Aorta (tissue), 5 donors: ENCODE measurements at regions of chr1 and their contacts with region 1.

Region 1: GRCh38 chr1:91282695-91283420 is 121.8 kb downstream of the HFM1 start:
- DNase-seq: no peak
- ATAC-seq: peak; percentile 86
- H3K4me3 ChIP-seq: no peak overlapping the region
- H3K27ac ChIP-seq: no peak overlapping the region
- H3K4me1 ChIP-seq: peaks cover 0 to 2% of the 10 kb centered on the region in 2 donors
- H3K27me3 ChIP-seq: no peaks in the 10 kb centered on the region

Region 2: DNA sequence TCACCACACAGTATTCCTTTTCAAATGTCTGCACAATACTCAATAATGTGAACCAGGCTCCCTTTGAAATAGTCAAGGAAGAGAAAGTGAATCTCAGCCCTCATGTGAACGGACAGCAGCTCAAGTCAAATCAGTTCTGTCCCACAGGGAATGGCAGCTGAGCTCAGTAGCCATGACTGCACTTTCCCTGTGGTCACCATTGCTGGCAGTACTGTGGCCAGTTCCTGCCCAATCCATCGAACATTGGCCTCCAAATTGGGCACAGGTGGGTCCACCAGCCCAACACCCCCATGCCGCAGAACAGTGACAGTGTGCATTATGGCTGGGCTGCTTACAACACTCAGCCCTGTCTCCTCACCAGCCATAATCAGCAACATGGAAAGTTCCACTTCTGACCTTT is 79.6 kb before region 1 on chr1:
- intact Hi-C with region 1: no loop called
- DNase-seq: no peak
- ATAC-seq: no peak
- H3K4me3 ChIP-seq: no peak overlapping the region
- H3K27ac ChIP-seq: no peak overlapping the region
- H3K4me1 ChIP-seq: no peaks in the 10 kb centered on the region
- H3K27me3 ChIP-seq: no peaks in the 10 kb centered on the region

Region 3: DNA sequence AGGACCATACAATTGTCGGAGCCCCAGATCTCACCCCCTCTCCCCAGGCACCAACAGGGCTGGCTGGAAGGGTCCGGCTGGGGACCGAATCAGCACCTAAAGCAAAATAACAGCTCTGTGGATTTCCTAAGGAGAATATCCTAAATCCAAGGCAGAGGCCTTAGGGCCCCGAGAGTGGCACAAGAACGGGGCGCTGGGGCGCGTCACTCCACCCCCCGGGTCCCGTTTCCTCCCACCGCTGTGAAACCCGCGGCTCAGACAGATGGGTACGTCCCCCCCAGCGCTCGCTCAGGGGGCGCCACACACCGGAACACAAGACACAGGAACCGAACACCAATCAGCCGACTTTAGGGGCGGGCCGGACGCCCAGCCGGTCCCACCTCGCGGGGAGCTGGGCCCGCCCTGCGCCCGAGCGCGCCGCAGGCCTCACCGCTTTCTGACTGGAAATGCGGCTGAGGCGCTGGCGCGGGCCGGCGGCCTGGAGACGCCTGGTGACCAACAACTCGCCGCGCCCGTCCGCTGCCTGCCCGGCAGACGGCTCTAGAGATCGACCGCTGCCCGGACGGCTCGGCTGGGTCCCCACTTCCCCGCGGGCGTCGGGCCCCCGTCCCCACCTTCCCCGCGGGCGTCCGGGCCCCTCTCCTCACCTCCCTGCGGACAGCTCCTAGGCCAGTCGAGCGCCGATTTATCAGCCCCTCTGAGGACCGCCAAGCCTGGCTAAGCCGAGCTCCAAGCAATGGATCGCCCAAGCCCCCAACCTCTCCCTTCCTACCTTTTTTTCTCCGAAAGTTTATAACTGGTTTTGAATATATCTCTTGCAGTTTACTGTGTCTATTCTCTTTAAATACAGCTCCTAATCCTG is 121.5 kb after region 1 on chr1 and contains the start of gene HFM1:
- intact Hi-C with region 1: loop called in 1 of 2 experiments (anchors 10 kb)
- DNase-seq: peak; percentile 82 to 92
- ATAC-seq: peak; percentile 94
- H3K4me3 ChIP-seq: peak within 1 kb of the TSS; percentile 1 to 18
- H3K27ac ChIP-seq: no peak within 1 kb of the TSS
- H3K4me1 ChIP-seq: no peaks in the 10 kb centered on the region
- H3K27me3 ChIP-seq: no peaks in the 10 kb centered on the region
- total RNA-seq, gene HFM1: 1.2 to 3.0 TPM

Region 4: GRCh38 chr1:91500756-91501522 is 218.1 kb after region 1 on chr1 and contains the start of gene CDC7:
- intact Hi-C with region 1: loop called in 1 of 2 experiments (anchors 5 kb)
- DNase-seq: peak; percentile 95 to 97
- ATAC-seq: peak; percentile 98
- H3K4me3 ChIP-seq: peak within 1 kb of the TSS; percentile 59 to 85
- H3K27ac ChIP-seq: peak within 1 kb of the TSS in 1 of 2 donors; percentile 73
- H3K4me1 ChIP-seq: no peaks in the 10 kb centered on the region
- H3K27me3 ChIP-seq: no peaks in the 10 kb centered on the region
- total RNA-seq, gene CDC7: 1.6 to 3.9 TPM